K562 (cell line): ENCODE measurements at regions of chr11 and their contacts with region 1.

Region 1: GRCh38 chr11:60056349-60056969 is at the start of gene MS4A3:
- DNase-seq: peak; percentile 20 to 76 (median 34)
- ATAC-seq: peak; percentile 90
- H3K4me3 ChIP-seq: peak within 1 kb of the TSS; percentile 19; the same call in 1 of the 2 replicates
- H3K27ac ChIP-seq: peak within 1 kb of the TSS; percentile 62; the same call in 2 of the 3 replicates
- H3K4me1 ChIP-seq: peaks cover 3 to 25% of the 10 kb centered on the region in 2 experiments; a peak in 4 of 5 replicates
- H3K27me3 ChIP-seq: no peaks in the 10 kb centered on the region
- CTCF ChIP-seq: no peak
- EP300 ChIP-seq: peak; percentile 78
- POLR2A ChIP-seq: no peak
- RAD21 ChIP-seq: peak in 1 of 2 experiments; percentile 47
- polyA plus RNA-seq, gene MS4A3: 84.8 to 94.5 TPM

Region 2: GRCh38 chr11:59967677-59968394 is 88.6 kb before region 1 on chr11:
- CTCF ChIA-PET with region 1: no interaction called
- POLR2A ChIA-PET with region 1: no interaction called
- in situ Hi-C with region 1: no loop called
- intact Hi-C with region 1: loop called (anchors 1 kb)
- DNase-seq: peak in 2 of 4 experiments; percentile 80 to 85
- ATAC-seq: peak; percentile 91
- H3K4me3 ChIP-seq: no peak overlapping the region
- H3K27ac ChIP-seq: peak overlapping the region; percentile 76
- H3K4me1 ChIP-seq: peaks cover 0 to 21% of the 10 kb centered on the region in 2 experiments; a peak in 3 of 5 replicates
- H3K27me3 ChIP-seq: no peaks in the 10 kb centered on the region
- CTCF ChIP-seq: no peak
- EP300 ChIP-seq: peak; percentile 98
- POLR2A ChIP-seq: no peak
- RAD21 ChIP-seq: peak; percentile 13 to 38; a peak in 3 of 4 replicates

Region 3: DNA sequence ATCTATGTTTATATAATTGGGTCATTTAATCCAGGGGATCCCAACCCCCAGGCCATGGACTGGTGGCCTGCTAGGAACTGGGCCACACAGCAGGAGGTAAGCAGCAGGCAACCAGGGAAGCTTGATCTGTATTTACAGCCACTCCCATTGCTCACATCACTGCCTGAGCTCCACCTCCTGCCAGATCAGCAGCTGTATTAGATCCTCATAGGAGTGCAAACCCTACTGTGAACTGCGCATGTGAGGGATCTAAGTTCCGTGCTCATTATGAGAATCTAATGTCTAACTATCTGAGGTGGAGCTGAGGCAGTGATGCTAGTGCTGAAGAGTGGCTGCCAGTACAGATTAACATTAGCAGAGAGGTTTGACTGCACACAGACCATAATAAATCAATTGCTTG is 64.8 kb after region 1 on chr11:
- CTCF ChIA-PET with region 1: no interaction called
- POLR2A ChIA-PET with region 1: no interaction called
- in situ Hi-C with region 1: no loop called
- intact Hi-C with region 1: loop called (anchors 5 kb)
- DNase-seq: peak in 2 of 4 experiments; percentile 41 to 80
- ATAC-seq: peak; percentile 95
- H3K4me3 ChIP-seq: no peak overlapping the region
- H3K27ac ChIP-seq: peak overlapping the region; percentile 20; the same call in 1 of the 3 replicates
- H3K4me1 ChIP-seq: peaks cover 3 to 38% of the 10 kb centered on the region in 2 experiments; a peak in 3 of 5 replicates
- H3K27me3 ChIP-seq: no peaks in the 10 kb centered on the region
- CTCF ChIP-seq: no peak
- EP300 ChIP-seq: no peak
- POLR2A ChIP-seq: no peak
- RAD21 ChIP-seq: peak; percentile 15 to 28; a peak in 1 of 4 replicates